ENCODE measurements at regions of chr13 and their contacts with region 1.

Region 1: DNA sequence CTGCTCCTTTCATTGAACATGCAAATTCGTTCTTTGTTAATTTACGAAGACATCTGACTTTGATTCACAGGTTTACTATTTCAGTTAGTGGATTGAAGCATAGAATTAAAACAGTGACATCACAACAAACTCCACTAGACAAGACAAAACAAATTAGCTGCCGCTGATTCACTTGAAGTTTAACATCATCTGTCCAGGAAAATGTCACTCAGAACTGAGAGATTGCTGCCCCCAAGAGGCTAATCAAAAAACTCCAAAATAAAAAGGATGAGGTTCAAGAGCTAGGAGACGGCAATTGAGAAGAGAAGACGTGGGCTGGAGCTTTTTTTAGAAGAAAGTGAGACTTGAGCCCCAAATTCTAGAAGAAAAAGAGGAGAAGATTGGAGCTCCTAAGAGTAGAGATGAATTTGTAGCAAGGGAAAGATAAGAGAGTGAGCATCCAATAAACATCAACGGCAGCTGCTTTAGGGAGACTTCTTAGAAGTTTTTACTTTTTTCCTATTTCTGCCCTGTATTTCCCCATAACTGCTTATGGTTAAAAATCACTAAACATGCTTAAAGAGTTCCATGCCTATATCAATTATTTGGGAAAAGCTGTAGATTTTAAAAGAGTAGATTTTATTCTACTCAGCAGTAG is 40.8 kb upstream of the TPP2 start:
- DNase-seq: no peak
- H3K4me3 ChIP-seq: no peak overlapping the region
- H3K27ac ChIP-seq: no peak overlapping the region
- H3K27me3 ChIP-seq: no peaks in the 10 kb centered on the region
- CTCF ChIP-seq: peak; percentile 51

Region 2: DNA sequence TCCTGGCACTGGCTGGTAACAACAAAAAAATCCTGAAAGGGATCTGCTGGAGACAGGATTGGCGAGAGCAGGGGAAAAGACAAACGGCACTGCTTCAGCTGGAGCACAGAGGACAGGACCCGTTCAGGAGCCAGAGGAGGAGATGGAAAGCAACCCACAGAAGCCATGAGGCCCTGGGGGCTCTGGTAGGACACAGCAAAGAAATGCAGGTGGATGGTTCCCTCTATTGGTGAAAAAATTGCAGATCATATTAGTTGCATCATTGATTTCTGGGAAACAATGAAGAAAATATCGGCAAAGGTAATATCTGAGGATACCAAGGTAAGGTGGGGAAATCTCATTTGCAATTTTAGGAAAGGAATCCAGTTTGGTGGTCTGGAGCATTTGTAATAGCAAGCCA is 15.0 kb after region 1 on chr13:
- CTCF ChIA-PET with region 1: interaction called, 22 read pairs
- POLR2A ChIA-PET with region 1: no interaction called
- DNase-seq: no peak
- H3K4me3 ChIP-seq: no peak overlapping the region
- H3K27ac ChIP-seq: no peak overlapping the region
- H3K27me3 ChIP-seq: peaks cover 2% of the 10 kb centered on the region
- CTCF ChIP-seq: 0 out of 2 replicates have a peak, but pooled peaks have one; percentile 11

Measured in AG04450 (cell line).